ENCODE measurements at regions of chr5 and their contacts with region 1.

Region 1: GRCh38 chr5:39370555-39371366 is 6.5 kb upstream of the C9 start:
- DNase-seq: no peak
- H3K4me3 ChIP-seq: no peak overlapping the region
- H3K27ac ChIP-seq: no peak overlapping the region
- H3K4me1 ChIP-seq: no peaks in the 10 kb centered on the region
- H3K27me3 ChIP-seq: no peaks in the 10 kb centered on the region
- CTCF ChIP-seq: no peak
- POLR2A ChIP-seq: no peak

Region 2: GRCh38 chr5:39815711-39816110 is 444.9 kb after region 1 on chr5:
- intact Hi-C with region 1: no loop called
- DNase-seq: no peak
- H3K4me3 ChIP-seq: no peak overlapping the region
- H3K27ac ChIP-seq: no peak overlapping the region
- H3K4me1 ChIP-seq: no peaks in the 10 kb centered on the region
- H3K27me3 ChIP-seq: no peaks in the 10 kb centered on the region
- CTCF ChIP-seq: no peak
- POLR2A ChIP-seq: no peak

Region 3: DNA sequence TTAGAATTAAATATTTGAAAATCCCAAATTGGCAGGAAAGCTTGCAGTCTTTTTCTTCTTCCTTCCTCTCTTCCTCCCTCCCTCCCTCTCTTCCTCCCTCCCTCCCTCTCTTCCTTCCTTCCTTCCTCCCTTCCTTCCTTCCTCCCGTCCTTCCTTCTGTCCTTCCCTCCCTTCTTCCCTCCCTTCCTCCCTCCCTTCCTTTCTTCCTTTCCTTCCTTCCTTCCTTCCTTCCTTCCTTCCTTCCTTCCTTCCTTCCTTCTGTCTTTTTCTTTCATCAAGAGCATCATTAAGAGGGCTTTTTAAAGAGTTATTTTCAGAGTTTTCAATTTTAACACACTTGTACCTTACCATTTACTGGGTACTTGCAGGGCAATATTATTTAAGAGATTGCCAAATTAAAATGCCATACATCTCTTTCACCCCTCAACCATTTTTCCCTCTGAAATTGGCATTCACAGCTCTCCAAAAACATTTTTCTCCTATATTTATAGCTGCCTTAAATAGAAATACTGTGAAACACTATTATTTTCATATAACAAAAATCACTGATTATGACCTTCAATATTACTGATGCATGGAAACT is 1941.8 kb after region 1 on chr5:
- intact Hi-C with region 1: loop called (anchors 5 kb)
- DNase-seq: no peak
- H3K4me3 ChIP-seq: no peak overlapping the region
- H3K27ac ChIP-seq: no peak overlapping the region
- H3K4me1 ChIP-seq: no peaks in the 10 kb centered on the region
- H3K27me3 ChIP-seq: no peaks in the 10 kb centered on the region
- CTCF ChIP-seq: no peak
- POLR2A ChIP-seq: no peak